ENCODE measurements at regions of chr17 and their contacts with region 1.

Region 1: DNA sequence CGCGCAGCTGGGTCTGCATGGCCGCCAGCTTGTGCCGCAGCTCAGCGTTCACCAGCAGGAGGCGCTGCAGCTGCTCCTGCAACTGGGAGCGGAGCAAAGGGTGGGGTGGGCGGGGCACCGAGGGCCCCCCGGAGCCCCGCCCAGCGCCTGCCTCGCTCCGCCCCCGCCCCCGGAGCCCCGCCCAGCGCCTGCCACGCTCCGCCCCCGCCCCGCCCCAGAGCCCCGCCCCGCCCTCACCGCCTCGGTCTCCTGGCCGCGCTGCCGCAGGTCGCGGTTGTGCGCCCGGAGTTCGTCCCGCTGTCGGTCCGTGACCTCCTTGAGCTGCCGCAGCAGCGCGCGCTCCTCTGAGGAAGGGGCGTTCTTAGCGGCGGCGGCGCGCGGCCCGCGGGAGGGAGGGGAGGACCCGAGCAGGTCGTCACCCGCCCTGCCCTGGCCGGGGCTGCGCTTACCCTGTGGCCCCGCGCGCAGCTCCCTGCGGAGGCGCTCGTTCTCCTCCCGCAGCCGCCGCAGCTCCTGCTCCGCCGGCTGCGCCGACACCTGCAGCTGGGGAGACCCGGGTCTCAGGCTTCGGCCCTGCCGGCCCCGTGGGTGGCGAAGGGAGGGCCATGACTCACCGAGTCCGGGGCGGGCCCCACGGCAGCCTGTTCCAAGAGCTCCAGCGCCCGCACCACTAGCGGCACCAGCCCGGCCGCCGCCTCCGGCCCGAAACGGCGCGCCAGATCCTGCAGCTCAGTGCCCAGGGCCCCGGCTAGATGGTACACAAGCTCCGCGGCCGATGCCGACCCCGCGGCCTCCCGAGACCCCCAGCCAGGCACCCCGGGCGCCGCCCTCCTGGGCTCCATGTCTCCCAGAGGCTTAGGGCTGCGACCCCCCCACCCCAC is 463 bp downstream of the RILP start:
- DNase-seq: peak; percentile 95
- H3K4me3 Mint-ChIP-seq: peak overlapping the region; percentile 62
- H3K27ac Mint-ChIP-seq: peak overlapping the region; percentile 64
- H3K4me1 Mint-ChIP-seq: peaks cover 37% of the 10 kb centered on the region
- H3K27me3 Mint-ChIP-seq: no peaks in the 10 kb centered on the region

Region 2: GRCh38 chr17:1573916-1574696 is 75.1 kb before region 1 on chr17:
- CTCF ChIA-PET with region 1: interaction called, 19 read pairs
- POLR2A ChIA-PET with region 1: no interaction called
- DNase-seq: peak; percentile 70
- H3K4me3 Mint-ChIP-seq: no peak overlapping the region
- H3K27ac Mint-ChIP-seq: no peak overlapping the region
- H3K4me1 Mint-ChIP-seq: peaks cover 3% of the 10 kb centered on the region
- H3K27me3 Mint-ChIP-seq: no peaks in the 10 kb centered on the region

Region 3: DNA sequence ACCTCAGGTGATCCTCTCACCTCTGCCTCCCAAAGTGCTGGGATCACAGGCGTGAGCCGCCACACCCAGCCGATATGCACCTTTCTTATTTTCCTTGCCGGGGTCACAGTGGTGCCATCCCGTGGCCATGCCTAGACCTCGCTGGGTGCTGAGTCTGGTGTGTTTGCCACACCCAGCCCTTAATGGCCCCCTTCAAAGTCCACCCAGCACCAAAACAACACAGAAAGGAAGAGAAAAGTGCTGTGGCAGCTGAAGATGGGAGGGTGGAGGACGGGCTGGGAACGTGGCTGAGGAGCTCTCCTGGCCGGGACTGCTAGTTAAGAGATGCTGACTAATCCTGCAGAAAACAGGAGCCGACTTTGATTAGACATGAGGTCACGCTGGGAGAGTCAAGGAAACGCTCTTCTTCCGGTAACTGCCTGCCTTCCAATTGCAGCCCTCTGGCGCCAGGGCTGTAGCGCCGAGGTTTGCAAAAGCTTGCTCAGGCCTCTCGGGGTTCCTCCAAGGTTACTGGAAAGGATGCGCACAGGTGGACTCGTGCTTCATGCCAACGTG is 31.5 kb before region 1 on chr17:
- CTCF ChIA-PET with region 1: no interaction called
- POLR2A ChIA-PET with region 1: no interaction called
- DNase-seq: no peak
- H3K4me3 Mint-ChIP-seq: no peak overlapping the region
- H3K27ac Mint-ChIP-seq: no peak overlapping the region
- H3K4me1 Mint-ChIP-seq: peaks cover 7% of the 10 kb centered on the region
- H3K27me3 Mint-ChIP-seq: no peaks in the 10 kb centered on the region

Region 4: GRCh38 chr17:1628856-1629646 is 20.2 kb before region 1 on chr17:
- CTCF ChIA-PET with region 1: interaction called, 25 read pairs
- POLR2A ChIA-PET with region 1: interaction called, 13 read pairs
- DNase-seq: peak; percentile 89
- H3K4me3 Mint-ChIP-seq: peak overlapping the region; percentile 83
- H3K27ac Mint-ChIP-seq: peak overlapping the region; percentile 53
- H3K4me1 Mint-ChIP-seq: peaks cover 17% of the 10 kb centered on the region
- H3K27me3 Mint-ChIP-seq: peaks cover 40% of the 10 kb centered on the region

Region 5: GRCh38 chr17:1661045-1661444 is 11.8 kb after region 1 on chr17:
- CTCF ChIA-PET with region 1: interaction called, 13 read pairs
- POLR2A ChIA-PET with region 1: interaction called, 15 read pairs
- DNase-seq: no peak
- H3K4me3 Mint-ChIP-seq: no peak overlapping the region
- H3K27ac Mint-ChIP-seq: no peak overlapping the region
- H3K4me1 Mint-ChIP-seq: no peaks in the 10 kb centered on the region
- H3K27me3 Mint-ChIP-seq: no peaks in the 10 kb centered on the region

Region 6: GRCh38 chr17:1673041-1673785 is 24.0 kb after region 1 on chr17:
- CTCF ChIA-PET with region 1: interaction called, 23 read pairs
- POLR2A ChIA-PET with region 1: interaction called, 7 read pairs
- DNase-seq: peak; percentile 51
- H3K4me3 Mint-ChIP-seq: no peak overlapping the region
- H3K27ac Mint-ChIP-seq: peak overlapping the region; percentile 70
- H3K4me1 Mint-ChIP-seq: peaks cover 32% of the 10 kb centered on the region
- H3K27me3 Mint-ChIP-seq: no peaks in the 10 kb centered on the region

Region 7: GRCh38 chr17:1684378-1685189 is 35.4 kb after region 1 on chr17 and contains the start of gene PRPF8:
- CTCF ChIA-PET with region 1: interaction called, 10 read pairs
- POLR2A ChIA-PET with region 1: interaction called, 12 read pairs
- DNase-seq: peak; percentile 99
- H3K4me3 Mint-ChIP-seq: peak within 1 kb of the TSS; percentile 99
- H3K27ac Mint-ChIP-seq: peak within 1 kb of the TSS; percentile 94
- H3K4me1 Mint-ChIP-seq: peaks cover 38% of the 10 kb centered on the region
- H3K27me3 Mint-ChIP-seq: no peaks in the 10 kb centered on the region
- total RNA-seq, gene PRPF8: 264 to 267 TPM

Region 8: GRCh38 chr17:1752425-1753262 is 103.4 kb after region 1 on chr17:
- CTCF ChIA-PET with region 1: no interaction called
- POLR2A ChIA-PET with region 1: no interaction called
- DNase-seq: no peak
- H3K4me3 Mint-ChIP-seq: no peak overlapping the region
- H3K27ac Mint-ChIP-seq: no peak overlapping the region
- H3K4me1 Mint-ChIP-seq: no peaks in the 10 kb centered on the region
- H3K27me3 Mint-ChIP-seq: peaks cover 3% of the 10 kb centered on the region

Region 9: GRCh38 chr17:1847191-1847590 is 198.0 kb after region 1 on chr17:
- CTCF ChIA-PET with region 1: no interaction called
- POLR2A ChIA-PET with region 1: no interaction called
- DNase-seq: no peak
- H3K4me3 Mint-ChIP-seq: no peak overlapping the region
- H3K27ac Mint-ChIP-seq: no peak overlapping the region
- H3K4me1 Mint-ChIP-seq: peaks cover 7% of the 10 kb centered on the region
- H3K27me3 Mint-ChIP-seq: no peaks in the 10 kb centered on the region

Measured in activated CD4-positive, alpha-beta memory T cell treated with anti-CD3 and anti-CD28 coated beads, Interleukin-2, amount 10 ng/mL, durations not matched to agents 7 days and 5 days (primary cell).